Activated naive CD4-positive, alpha-beta T cell treated with anti-CD3 and anti-CD28 coated beads, Interleukin-2, amount 10 ng/mL, durations not matched to agents 7 days and 5 days (primary cell): ENCODE measurements at regions of chr15 and their contacts with region 1.

Region 1: DNA sequence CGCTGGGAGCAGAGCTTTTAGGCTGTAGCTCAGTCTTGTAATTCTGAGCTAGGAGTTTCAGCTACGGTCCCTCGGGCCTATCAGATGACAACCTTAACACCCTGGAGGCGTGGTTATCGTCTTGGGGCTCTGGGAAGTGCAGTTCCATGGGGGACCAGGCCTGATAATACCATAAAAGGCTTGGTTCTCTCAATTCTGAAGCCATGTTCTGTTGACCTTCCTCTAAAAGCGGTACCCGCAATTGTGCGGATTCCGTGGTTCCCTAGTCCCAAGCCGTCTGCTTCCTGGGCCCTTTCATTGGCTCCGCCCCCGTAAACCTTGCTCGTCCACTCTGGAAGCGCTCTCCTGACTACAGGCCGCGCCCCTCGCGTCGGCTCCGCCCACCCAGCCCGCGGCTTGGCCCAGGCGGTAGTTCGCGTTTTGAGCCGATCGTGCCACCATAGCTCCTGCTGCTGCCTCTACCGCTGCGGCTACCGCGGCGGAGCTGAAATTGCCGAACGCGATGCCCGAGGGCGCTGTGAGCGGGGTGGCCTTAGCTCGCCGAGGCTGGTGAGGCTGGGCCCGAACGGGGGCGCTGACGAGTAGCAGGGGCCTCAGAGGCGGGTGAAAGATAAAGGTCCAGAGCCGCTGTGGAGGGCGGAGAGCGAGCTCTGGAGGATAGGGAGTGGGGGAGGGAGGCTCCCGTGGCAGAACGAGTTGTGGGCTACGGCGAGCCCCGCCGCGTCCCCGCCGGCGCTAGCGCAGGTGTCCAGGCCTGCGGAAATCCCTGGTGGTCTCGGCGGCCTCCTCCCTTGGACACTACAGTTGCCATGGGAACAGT is at the start of gene MAPKBP1:
- DNase-seq: peak; percentile 99
- H3K4me3 Mint-ChIP-seq: peak within 1 kb of the TSS; percentile 95
- H3K27ac Mint-ChIP-seq: peak within 1 kb of the TSS; percentile 97
- H3K4me1 Mint-ChIP-seq: peaks cover 61% of the 10 kb centered on the region
- H3K27me3 Mint-ChIP-seq: no peaks in the 10 kb centered on the region

Region 2: GRCh38 chr15:41594801-41595746 is 179.2 kb before region 1 on chr15:
- CTCF ChIA-PET with region 1: no interaction called
- DNase-seq: no peak
- H3K4me3 Mint-ChIP-seq: no peak overlapping the region
- H3K27ac Mint-ChIP-seq: no peak overlapping the region
- H3K4me1 Mint-ChIP-seq: no peaks in the 10 kb centered on the region
- H3K27me3 Mint-ChIP-seq: peaks cover 38% of the 10 kb centered on the region

Region 3: DNA sequence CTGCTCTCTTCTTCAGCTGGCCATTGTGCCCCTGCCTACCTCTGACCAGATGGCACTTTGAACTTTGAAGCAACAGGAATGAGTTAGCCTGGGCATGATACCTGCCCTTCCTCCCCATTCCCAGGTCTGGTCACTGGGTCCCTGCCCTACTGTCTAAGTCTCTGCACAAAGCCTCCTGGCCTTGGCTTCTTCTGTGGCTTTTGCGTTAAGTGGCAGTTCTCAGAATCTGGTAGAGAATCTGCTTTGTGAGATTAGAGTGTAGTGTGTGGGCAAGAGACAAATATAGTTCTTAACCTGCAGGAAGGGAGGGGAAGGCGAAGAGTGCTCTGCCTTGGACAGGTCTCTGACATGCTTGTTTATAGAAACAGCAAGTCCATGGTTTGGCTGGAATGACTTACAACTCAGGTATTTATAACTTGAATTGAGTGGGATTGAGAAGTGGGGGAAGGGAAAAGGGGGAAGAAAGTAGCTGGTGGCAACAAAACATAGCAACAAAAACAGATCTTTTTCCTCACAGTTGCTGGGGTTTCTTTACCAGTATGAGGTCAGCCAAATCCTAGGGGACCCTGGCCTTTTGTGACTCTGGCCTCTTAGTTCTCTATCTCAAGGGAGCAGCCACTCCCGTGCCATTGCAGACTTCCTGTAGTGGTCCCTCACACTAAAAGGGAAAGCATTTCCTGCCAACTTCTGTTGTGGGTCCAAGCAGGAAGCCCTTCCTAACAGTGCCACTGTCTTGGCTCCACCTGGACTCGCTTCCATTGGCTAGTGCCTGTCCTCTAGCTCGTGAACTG is 16.7 kb after region 1 on chr15:
- CTCF ChIA-PET with region 1: interaction called, 10 read pairs
- DNase-seq: no peak
- H3K4me3 Mint-ChIP-seq: peak overlapping the region; percentile 54
- H3K27ac Mint-ChIP-seq: peak overlapping the region; percentile 84
- H3K4me1 Mint-ChIP-seq: peaks cover 53% of the 10 kb centered on the region
- H3K27me3 Mint-ChIP-seq: no peaks in the 10 kb centered on the region

Region 4: GRCh38 chr15:41801850-41802455 is 27.7 kb after region 1 on chr15:
- CTCF ChIA-PET with region 1: interaction called, 253 read pairs
- DNase-seq: no peak
- H3K4me3 Mint-ChIP-seq: no peak overlapping the region
- H3K27ac Mint-ChIP-seq: no peak overlapping the region
- H3K4me1 Mint-ChIP-seq: peaks cover 22% of the 10 kb centered on the region
- H3K27me3 Mint-ChIP-seq: no peaks in the 10 kb centered on the region

Region 5: DNA sequence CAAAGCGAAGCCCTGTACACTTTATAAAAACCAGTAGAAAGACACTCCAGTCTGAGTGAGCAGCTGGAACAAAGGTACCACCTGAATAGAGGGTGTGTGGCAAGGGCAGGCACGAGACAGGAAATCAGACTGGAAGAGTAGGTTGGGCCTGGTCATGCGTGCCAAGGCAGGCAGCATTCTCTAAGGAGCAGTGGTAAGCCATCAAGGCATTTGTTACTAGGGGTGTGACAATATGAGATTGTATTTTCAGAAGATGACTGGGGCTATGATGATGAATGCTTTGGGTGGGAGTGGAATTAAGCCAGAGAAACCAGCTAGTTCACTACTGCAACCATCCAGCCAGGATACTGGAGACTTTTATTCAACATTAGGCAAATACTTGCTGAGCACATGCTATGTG is 58.6 kb after region 1 on chr15:
- CTCF ChIA-PET with region 1: interaction called, 16 read pairs
- DNase-seq: no peak
- H3K4me3 Mint-ChIP-seq: no peak overlapping the region
- H3K27ac Mint-ChIP-seq: peak overlapping the region; percentile 8
- H3K4me1 Mint-ChIP-seq: peaks cover 50% of the 10 kb centered on the region
- H3K27me3 Mint-ChIP-seq: peaks cover 6% of the 10 kb centered on the region

Region 6: DNA sequence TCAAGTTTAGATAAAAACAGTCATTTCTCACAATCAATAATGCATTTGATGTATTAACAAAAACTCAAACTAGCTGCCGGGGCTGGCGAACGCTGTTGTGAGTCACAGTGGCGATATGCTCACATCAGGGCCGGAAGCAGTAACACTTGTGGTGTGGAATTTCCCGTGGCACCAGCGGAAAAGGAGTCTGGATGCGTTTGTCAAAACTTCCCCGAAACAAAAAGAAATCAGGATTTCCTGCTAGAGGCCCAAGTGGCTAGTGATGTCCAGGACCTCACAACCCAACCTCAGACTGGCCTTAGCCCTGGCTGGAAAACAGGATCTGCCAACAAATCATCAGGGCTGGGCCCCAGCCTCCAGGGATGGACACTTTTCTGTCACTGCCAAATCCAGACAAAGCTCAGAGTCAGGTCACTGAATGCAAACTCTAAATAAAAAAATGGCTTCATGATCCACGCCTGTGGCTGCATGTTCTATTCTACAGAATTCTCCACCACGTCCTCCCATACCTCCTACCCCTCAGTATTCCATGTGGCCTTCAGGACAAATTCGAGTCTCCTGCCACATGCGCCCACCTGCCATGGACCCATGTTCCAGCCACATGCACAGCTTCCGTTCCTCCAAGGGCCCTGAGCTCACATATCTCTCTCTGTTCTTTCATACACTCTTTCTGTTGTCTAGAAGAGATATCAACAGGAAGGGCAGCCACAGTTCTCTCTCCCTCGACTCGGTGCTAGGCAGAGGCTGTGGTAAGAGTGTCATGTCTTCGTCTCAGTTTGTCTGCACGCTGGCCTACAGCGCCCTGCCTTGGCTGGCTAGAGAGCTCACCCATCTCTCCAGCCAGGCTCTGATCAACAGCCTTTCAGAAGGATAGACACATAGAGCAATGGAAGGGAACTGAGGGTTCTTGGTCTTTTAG is 162.6 kb after region 1 on chr15:
- CTCF ChIA-PET with region 1: interaction called, 17 read pairs
- DNase-seq: peak; percentile 83
- H3K4me3 Mint-ChIP-seq: peak overlapping the region; percentile 53
- H3K27ac Mint-ChIP-seq: peak overlapping the region; percentile 97
- H3K4me1 Mint-ChIP-seq: peaks cover 77% of the 10 kb centered on the region
- H3K27me3 Mint-ChIP-seq: no peaks in the 10 kb centered on the region